ENCODE measurements at regions of chr1 and their contacts with region 1.

Region 1: GRCh38 chr1:185170291-185170848 is 13.4 kb downstream of the SWT1 start:
- DNase-seq: peak; percentile 39
- ATAC-seq: peak; percentile 90
- H3K4me3 ChIP-seq: no peak overlapping the region
- H3K27ac ChIP-seq: no peak overlapping the region
- H3K4me1 ChIP-seq: no peaks in the 10 kb centered on the region
- H3K27me3 ChIP-seq: no peaks in the 10 kb centered on the region
- CTCF ChIP-seq: peak; percentile 90

Region 2: GRCh38 chr1:184805667-184806295 is 364.6 kb before region 1 on chr1:
- CTCF ChIA-PET with region 1: interaction called, 9 read pairs
- POLR2A ChIA-PET with region 1: no interaction called
- in situ Hi-C with region 1: no loop called
- intact Hi-C with region 1: loop called (anchors 1 kb)
- DNase-seq: peak; percentile 82
- ATAC-seq: peak; percentile 100
- H3K4me3 ChIP-seq: 0 out of 4 replicates have a peak overlapping the region, but pooled peaks of 1 of the 2 experiments have one; percentile 14
- H3K27ac ChIP-seq: no peak overlapping the region
- H3K4me1 ChIP-seq: no peaks in the 10 kb centered on the region
- H3K27me3 ChIP-seq: no peaks in the 10 kb centered on the region
- CTCF ChIP-seq: peak; percentile 91

Region 3: DNA sequence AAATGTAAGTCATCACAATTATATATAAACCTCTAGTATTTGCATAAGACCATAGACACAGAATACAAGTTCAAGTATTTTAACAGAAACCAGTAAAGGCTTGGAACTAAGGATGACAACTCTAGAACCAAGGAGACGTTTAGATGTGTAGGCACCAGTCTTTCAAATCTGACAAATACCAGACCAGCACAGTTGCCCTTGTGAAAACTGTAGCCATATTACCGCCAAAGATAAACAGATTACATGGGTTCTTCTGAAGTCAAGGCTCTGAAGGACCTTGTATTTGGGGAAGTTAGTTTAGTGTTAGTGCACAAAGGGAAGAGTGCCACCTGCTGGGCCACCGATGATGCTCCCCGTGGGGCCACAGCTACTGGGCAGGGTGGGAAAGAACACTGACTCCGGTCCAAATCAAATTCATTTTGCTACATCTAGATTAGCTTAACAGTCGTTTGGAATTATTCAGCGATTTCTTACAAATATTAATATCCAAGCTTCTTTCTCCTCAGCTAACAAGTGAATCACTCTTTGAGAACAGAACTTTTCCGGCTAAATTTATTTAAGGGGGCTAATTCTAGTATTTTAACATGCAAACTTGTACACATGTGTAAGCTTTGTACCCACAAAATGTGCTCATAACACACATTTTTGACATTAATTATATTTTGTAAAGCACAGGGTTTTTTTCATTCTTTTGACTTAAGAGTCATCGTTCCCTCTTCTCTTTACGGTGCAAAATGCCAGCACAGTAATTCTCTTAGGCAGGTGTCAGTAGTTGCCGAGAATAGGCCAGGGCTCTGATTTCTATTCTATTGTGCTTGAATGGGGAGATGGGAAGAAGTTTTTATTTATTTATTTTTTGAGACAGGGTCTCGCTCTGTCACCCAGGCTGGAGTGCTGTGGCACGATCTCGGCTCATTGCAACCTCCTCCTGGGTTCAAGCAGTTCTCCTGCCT is 188.1 kb before region 1 on chr1:
- CTCF ChIA-PET with region 1: interaction called, 4 read pairs
- POLR2A ChIA-PET with region 1: no interaction called
- in situ Hi-C with region 1: no loop called
- intact Hi-C with region 1: loop called (anchors 5 kb)
- DNase-seq: peak; percentile 59
- ATAC-seq: peak; percentile 97
- H3K4me3 ChIP-seq: no peak overlapping the region
- H3K27ac ChIP-seq: no peak overlapping the region
- H3K4me1 ChIP-seq: no peaks in the 10 kb centered on the region
- H3K27me3 ChIP-seq: peaks cover 13% of the 10 kb centered on the region
- CTCF ChIP-seq: peak; percentile 91

Region 4: DNA sequence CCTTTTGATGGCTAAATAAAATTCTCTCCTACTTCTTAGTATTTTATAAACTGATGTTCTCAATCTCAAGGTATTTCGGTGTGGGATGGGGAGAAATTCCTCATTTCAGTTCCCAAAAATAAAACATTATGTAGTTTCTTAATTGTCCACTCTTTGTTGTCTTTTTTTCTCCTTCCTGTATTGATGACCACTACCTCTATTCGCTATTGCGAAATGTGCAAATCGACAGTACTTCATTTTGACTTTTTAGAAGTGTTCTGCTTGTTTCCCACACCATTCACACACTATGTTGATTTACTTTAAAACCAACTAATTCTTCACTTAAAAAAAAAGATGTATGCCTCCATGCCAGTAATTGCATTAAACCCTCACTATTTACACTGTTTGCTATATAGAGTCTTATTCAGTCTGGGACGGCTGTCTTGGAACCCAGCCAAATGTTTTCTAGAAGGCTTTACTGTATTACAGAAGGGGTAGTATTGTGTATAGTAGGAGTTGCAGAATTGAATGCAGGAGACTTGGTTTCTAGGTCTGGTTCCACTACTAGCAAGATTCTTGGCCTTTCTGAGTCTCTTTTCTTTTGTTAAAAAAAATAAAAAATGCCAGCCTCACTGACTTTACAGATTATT is 119.4 kb before region 1 on chr1:
- CTCF ChIA-PET with region 1: no interaction called
- POLR2A ChIA-PET with region 1: no interaction called
- in situ Hi-C with region 1: no loop called
- intact Hi-C with region 1: loop called (anchors 2 kb)
- DNase-seq: no peak
- ATAC-seq: no peak
- H3K4me3 ChIP-seq: no peak overlapping the region
- H3K27ac ChIP-seq: no peak overlapping the region
- H3K4me1 ChIP-seq: peaks cover 14% of the 10 kb centered on the region; the same call in 1 of the 2 replicates
- H3K27me3 ChIP-seq: no peaks in the 10 kb centered on the region
- CTCF ChIP-seq: no peak

Region 5: GRCh38 chr1:185158800-185159199 is 11.6 kb before region 1 on chr1:
- CTCF ChIA-PET with region 1: no interaction called
- POLR2A ChIA-PET with region 1: interaction called, 12 read pairs
- in situ Hi-C with region 1: no loop called
- intact Hi-C with region 1: no loop called
- DNase-seq: no peak
- ATAC-seq: no peak
- H3K4me3 ChIP-seq: no peak overlapping the region
- H3K27ac ChIP-seq: no peak overlapping the region
- H3K4me1 ChIP-seq: peaks cover 12% of the 10 kb centered on the region
- H3K27me3 ChIP-seq: no peaks in the 10 kb centered on the region
- CTCF ChIP-seq: no peak

Region 6: DNA sequence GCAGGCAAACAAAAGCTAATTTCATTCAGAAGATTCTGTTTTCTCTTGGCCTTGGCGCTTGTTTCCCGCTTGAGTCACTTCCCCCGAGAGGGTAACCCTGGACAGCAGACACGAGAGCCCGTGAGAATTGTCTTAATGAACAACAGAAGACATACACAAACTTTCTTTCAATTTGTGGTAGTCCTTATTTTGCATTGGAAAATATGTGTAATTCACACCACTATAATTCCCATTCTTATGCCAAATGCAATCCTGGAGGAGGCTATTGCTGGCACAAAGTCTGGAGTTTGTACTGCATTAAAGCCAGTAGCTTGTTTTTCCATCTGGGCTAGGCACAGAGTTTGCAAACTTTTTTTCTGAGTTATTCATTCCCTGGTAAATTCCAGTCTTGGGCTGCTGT is 256.5 kb after region 1 on chr1:
- CTCF ChIA-PET with region 1: no interaction called
- POLR2A ChIA-PET with region 1: no interaction called
- in situ Hi-C with region 1: no loop called
- intact Hi-C with region 1: no loop called
- DNase-seq: no peak
- ATAC-seq: no peak
- H3K4me3 ChIP-seq: no peak overlapping the region
- H3K27ac ChIP-seq: no peak overlapping the region
- H3K4me1 ChIP-seq: no peaks in the 10 kb centered on the region
- H3K27me3 ChIP-seq: no peaks in the 10 kb centered on the region
- CTCF ChIP-seq: no peak

Region 7: GRCh38 chr1:185767508-185768120 is 597.2 kb after region 1 on chr1:
- CTCF ChIA-PET with region 1: no interaction called
- POLR2A ChIA-PET with region 1: interaction called, 12 read pairs
- in situ Hi-C with region 1: no loop called
- intact Hi-C with region 1: no loop called
- DNase-seq: no peak
- ATAC-seq: no peak
- H3K4me3 ChIP-seq: no peak overlapping the region
- H3K27ac ChIP-seq: no peak overlapping the region
- H3K4me1 ChIP-seq: no peaks in the 10 kb centered on the region
- H3K27me3 ChIP-seq: no peaks in the 10 kb centered on the region
- CTCF ChIP-seq: no peak

Region 8: GRCh38 chr1:186112280-186112679 is 941.9 kb after region 1 on chr1:
- CTCF ChIA-PET with region 1: no interaction called
- POLR2A ChIA-PET with region 1: no interaction called
- in situ Hi-C with region 1: no loop called
- intact Hi-C with region 1: no loop called
- DNase-seq: no peak
- ATAC-seq: no peak
- H3K4me3 ChIP-seq: no peak overlapping the region
- H3K27ac ChIP-seq: no peak overlapping the region
- H3K4me1 ChIP-seq: no peaks in the 10 kb centered on the region
- H3K27me3 ChIP-seq: no peaks in the 10 kb centered on the region
- CTCF ChIP-seq: no peak

Measured in Panc1 (cell line).